ENCODE measurements at regions of chr2 and their contacts with region 1.

Region 1: GRCh38 chr2:38581193-38582147 is 21.3 kb downstream of the HNRNPLL start:
- H3K4me3 Mint-ChIP-seq: no peak overlapping the region
- H3K27ac Mint-ChIP-seq: no peak overlapping the region
- H3K4me1 Mint-ChIP-seq: peaks cover 4% of the 10 kb centered on the region
- H3K27me3 Mint-ChIP-seq: no peaks in the 10 kb centered on the region

Region 2: DNA sequence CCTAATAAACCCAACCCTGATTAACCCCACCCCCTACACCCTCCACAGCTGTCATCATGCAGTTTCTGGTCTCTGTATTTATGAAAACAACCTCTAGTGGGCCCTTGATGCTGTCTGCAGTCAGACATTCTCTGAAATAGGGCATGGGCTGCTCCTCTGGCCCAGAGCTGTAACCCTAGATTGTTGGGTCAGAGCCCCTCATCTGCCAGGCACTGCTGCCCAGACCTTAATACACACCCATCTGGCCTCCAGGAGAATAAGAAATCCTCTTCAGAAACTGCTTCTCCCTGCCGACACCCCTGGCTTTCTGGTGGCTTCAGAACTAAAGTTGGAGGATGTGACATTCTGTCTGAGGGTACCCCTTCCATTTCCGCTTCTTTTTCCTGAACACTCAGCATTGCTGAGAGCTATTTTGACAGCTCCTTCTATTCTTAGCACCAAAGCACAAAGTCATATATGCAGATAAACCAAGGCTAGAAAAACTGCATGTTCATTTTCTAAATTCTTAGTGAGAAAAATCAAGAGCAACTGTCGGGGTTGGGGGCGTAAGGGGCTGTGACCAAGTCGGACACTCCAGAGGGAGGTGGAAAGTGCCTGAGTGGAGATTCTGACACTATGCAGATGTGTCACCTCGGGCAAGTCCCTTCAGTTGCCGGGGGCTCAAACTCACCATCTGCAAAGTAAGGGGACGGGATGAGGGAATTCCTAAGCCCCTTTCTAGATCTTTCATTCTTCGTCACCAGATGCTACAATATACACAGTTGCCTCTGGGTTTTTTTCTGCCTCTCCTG is 141.0 kb after region 1 on chr2:
- intact Hi-C with region 1: loop called (anchors 1 kb)
- H3K4me3 Mint-ChIP-seq: no peak overlapping the region
- H3K27ac Mint-ChIP-seq: no peak overlapping the region
- H3K4me1 Mint-ChIP-seq: peaks cover 33% of the 10 kb centered on the region
- H3K27me3 Mint-ChIP-seq: no peaks in the 10 kb centered on the region

Region 3: GRCh38 chr2:38898256-38898655 is 316.8 kb after region 1 on chr2:
- intact Hi-C with region 1: no loop called
- H3K4me3 Mint-ChIP-seq: no peak overlapping the region
- H3K27ac Mint-ChIP-seq: no peak overlapping the region
- H3K4me1 Mint-ChIP-seq: no peaks in the 10 kb centered on the region
- H3K27me3 Mint-ChIP-seq: no peaks in the 10 kb centered on the region